GM13976 (cell line): ENCODE measurements at regions of chr13 and their contacts with region 1.

Region 1: DNA sequence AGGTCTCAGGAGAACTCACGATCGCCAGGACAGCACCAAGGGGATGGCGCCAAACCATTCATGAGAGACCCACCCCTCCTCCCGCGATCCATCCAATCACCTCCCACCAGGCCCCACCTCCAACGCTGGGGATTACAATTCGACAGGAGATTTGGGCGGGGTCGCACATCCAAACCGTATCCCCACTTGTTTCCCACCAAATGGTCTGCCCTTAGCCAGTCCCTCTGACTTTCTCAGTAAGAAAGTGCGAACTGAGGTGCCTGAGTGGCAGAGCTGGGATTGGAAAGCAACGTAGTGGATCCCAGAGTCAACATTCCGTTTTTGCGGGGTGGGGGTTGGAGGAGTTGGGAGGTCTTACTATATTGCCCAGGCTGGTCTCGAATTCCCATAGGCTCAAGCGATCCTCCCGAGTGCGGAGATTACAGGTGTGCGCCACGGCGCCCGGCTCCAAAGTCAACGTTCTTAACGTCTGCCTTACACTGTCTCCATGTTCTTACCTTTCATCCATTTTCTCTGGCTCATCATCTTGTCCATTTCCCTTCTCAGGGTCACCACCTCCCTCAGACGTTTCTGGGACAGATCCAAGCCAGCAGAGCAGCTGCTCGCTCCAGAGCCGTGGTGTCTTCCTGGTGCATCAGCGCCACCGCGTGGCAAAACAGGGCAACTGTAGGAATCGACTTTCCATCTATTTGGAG is 102.7 kb upstream of the ABCC4 start:
- DNase-seq: peak; percentile 85
- CTCF ChIP-seq: peak; percentile 88

Region 2: GRCh38 chr13:94601446-94602431 is 802.2 kb before region 1 on chr13 and contains the start of gene GPR180:
- in situ Hi-C with region 1: loop called (anchors 25 kb)
- DNase-seq: peak; percentile 96
- CTCF ChIP-seq: no peak

Region 3: GRCh38 chr13:94710881-94711560 is 693.0 kb before region 1 on chr13:
- in situ Hi-C with region 1: no loop called
- DNase-seq: peak; percentile 69
- CTCF ChIP-seq: no peak

Region 4: GRCh38 chr13:95039415-95039814 is 364.6 kb before region 1 on chr13:
- in situ Hi-C with region 1: no loop called
- DNase-seq: no peak
- CTCF ChIP-seq: no peak

Region 5: GRCh38 chr13:95207769-95208366 is 196.1 kb before region 1 on chr13:
- in situ Hi-C with region 1: no loop called
- DNase-seq: peak; percentile 53
- CTCF ChIP-seq: no peak

Region 6: DNA sequence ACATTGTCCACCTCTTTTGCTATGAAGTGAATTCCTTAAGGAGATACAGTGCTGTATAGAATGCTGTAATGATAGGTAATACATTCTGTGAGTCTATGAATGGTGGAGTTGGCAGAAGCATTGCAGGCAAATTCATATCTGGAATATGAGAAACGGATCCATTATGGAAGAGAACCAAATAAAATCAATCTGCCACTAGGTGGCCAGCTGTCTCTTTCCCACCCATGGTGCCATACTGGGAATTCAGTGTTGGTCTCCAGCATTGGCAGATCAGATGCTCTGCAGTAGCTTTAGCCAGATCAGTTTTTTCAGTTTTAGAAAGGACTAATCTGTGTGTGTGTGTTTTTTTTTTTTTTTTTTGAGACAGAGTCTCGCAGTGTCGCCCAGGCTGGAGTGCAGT is 300.5 kb after region 1 on chr13:
- in situ Hi-C with region 1: no loop called
- DNase-seq: no peak
- CTCF ChIP-seq: no peak